ENCODE measurements at regions of chr19 and their contacts with region 1.

Region 1: GRCh38 chr19:21767065-21767800 is at the start of gene ZNF100:
- DNase-seq: peak; percentile 90
- ATAC-seq: peak; percentile 99
- H3K4me3 ChIP-seq: peak within 1 kb of the TSS; percentile 94
- H3K27ac ChIP-seq: peak within 1 kb of the TSS; percentile 73
- H3K4me1 ChIP-seq: no peaks in the 10 kb centered on the region
- H3K27me3 ChIP-seq: no peaks in the 10 kb centered on the region
- CTCF ChIP-seq: no peak
- POLR2A ChIP-seq: peak; percentile 70; the same call in 1 of the 2 replicates
- RAD21 ChIP-seq: no peak
- total RNA-seq, gene ZNF100: 5.9 and 6.7 TPM in 2 replicates

Region 2: DNA sequence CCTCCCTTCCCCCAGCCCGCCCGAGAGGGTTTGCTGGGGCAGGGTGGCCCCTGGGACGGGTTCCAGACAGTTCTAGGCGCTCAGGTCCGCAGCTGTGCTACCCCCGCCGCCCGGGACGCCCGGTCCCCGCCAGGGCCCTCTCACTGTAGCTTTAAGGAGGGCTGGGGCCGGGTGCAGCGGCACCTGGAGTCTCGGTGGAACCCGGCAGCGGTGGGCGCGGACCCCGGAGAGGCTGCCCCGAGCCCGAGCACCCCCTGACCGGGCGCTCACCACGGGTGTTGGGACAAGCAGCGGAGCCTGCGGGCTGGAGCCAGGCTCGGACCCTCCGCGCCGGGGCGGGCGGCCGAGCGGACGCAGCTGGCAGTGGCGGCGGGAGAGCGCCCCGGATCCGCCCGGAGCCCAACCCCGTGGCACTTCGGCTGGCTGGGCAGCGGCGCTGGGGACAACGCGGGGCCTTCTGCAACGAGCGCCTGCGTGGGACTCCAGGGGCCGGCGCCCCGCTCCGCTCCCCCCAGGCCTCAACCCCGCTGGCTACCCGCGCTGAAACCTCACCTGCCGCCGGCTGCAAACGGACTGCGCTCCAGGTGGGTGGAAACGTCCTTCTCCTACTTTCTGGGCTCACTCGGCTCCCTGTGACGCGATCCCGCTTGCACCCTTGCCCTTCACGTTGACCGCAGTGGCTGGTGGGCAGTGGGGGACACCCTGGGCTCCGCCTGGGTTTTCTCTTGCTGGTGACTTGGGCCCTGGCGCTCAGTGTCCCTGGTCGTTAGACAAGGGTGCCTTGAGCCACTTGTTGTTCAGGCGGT is 180.7 kb before region 1 on chr19:
- CTCF ChIA-PET with region 1: no interaction called
- POLR2A ChIA-PET with region 1: no interaction called
- dilution Hi-C with region 1: no loop called
- in situ Hi-C with region 1: no loop called
- intact Hi-C with region 1: no loop called
- DNase-seq: no peak
- ATAC-seq: peak; percentile 44
- H3K4me3 ChIP-seq: no peak overlapping the region
- H3K27ac ChIP-seq: no peak overlapping the region
- H3K4me1 ChIP-seq: no peaks in the 10 kb centered on the region
- H3K27me3 ChIP-seq: no peaks in the 10 kb centered on the region; the same call in 1 of the 2 replicates
- CTCF ChIP-seq: no peak
- POLR2A ChIP-seq: no peak
- RAD21 ChIP-seq: no peak

Region 3: GRCh38 chr19:21835810-21836444 is 68.7 kb after region 1 on chr19 and contains the start of gene ZNF43:
- CTCF ChIA-PET with region 1: no interaction called
- POLR2A ChIA-PET with region 1: no interaction called
- dilution Hi-C with region 1: no loop called
- in situ Hi-C with region 1: no loop called
- intact Hi-C with region 1: loop called (anchors 5 kb)
- DNase-seq: peak; percentile 91
- ATAC-seq: peak; percentile 99
- H3K4me3 ChIP-seq: peak within 1 kb of the TSS; percentile 65
- H3K27ac ChIP-seq: peak within 1 kb of the TSS; percentile 79
- H3K4me1 ChIP-seq: no peaks in the 10 kb centered on the region
- H3K27me3 ChIP-seq: no peaks in the 10 kb centered on the region
- CTCF ChIP-seq: no peak
- POLR2A ChIP-seq: peak; percentile 83; the same call in 1 of the 2 replicates
- RAD21 ChIP-seq: no peak
- total RNA-seq, gene ZNF43: 8.8 and 10.6 TPM in 2 replicates

Region 4: DNA sequence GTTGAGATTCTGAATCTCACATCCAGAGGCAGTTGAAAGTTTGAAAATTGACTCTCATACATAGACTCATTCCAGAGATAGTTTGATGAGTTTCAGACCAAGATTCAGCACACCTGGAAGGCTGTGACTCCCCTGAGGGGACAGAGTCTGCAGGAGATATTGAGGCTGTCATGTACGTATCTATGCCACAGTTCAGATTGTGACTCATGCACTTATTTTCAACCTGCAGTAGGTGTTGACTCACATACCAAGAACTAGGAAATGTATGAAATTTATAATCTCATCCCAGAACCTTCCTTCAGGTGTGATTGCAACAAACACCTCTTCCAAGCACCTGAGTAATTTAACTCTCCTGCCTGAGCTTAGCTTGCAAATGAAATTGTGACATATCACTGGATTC is 133.1 kb after region 1 on chr19:
- CTCF ChIA-PET with region 1: no interaction called
- POLR2A ChIA-PET with region 1: no interaction called
- dilution Hi-C with region 1: no loop called
- in situ Hi-C with region 1: no loop called
- intact Hi-C with region 1: no loop called
- DNase-seq: no peak
- ATAC-seq: no peak
- H3K4me3 ChIP-seq: no peak overlapping the region
- H3K27ac ChIP-seq: no peak overlapping the region
- H3K4me1 ChIP-seq: no peaks in the 10 kb centered on the region
- H3K27me3 ChIP-seq: no peaks in the 10 kb centered on the region
- CTCF ChIP-seq: no peak
- POLR2A ChIP-seq: no peak
- RAD21 ChIP-seq: no peak

Measured in IMR-90 (cell line).